Naive thymus-derived CD4-positive, alpha-beta T cell (primary cell): ENCODE measurements at regions of chr3 and their contacts with region 1.

Region 1: GRCh38 chr3:43621656-43622432 is at the start of gene ANO10:
- DNase-seq: peak; percentile 82 to 99 (median 91)
- ATAC-seq: peak; percentile 97
- H3K4me3 ChIP-seq: peak within 1 kb of the TSS; percentile 84
- H3K4me3 Mint-ChIP-seq: peak within 1 kb of the TSS; percentile 82 to 94 (median 91)
- H3K27ac ChIP-seq: peak within 1 kb of the TSS; percentile 60
- H3K27ac Mint-ChIP-seq: peak within 1 kb of the TSS; percentile 68 to 92 (median 86)
- H3K4me1 ChIP-seq: peaks cover 11 to 15% of the 10 kb centered on the region in 2 donors
- H3K4me1 Mint-ChIP-seq: peaks cover 8 to 26% (median 23%) of the 10 kb centered on the region in 7 donors
- H3K27me3 ChIP-seq: no peaks in the 10 kb centered on the region
- H3K27me3 Mint-ChIP-seq: peaks cover 0 to 15% (median 0%) of the 10 kb centered on the region in 5 donors
- total RNA-seq, gene ANO10: 6.1 to 13.6 (median 9.3) TPM

Region 2: GRCh38 chr3:42581709-42582473 is 1040.0 kb before region 1 on chr3 and contains the start of gene SEC22C:
- CTCF ChIA-PET with region 1: no interaction called
- POLR2A ChIA-PET with region 1: no interaction called
- intact Hi-C with region 1: loop called in 1 of 2 experiments (anchors 5 kb)
- DNase-seq: peak; percentile 86 to 95 (median 94)
- ATAC-seq: peak; percentile 94
- H3K4me3 ChIP-seq: peak within 1 kb of the TSS; percentile 86
- H3K4me3 Mint-ChIP-seq: peak within 1 kb of the TSS; percentile 77 to 97 (median 94)
- H3K27ac ChIP-seq: peak within 1 kb of the TSS; percentile 92
- H3K27ac Mint-ChIP-seq: peak within 1 kb of the TSS; percentile 89 to 99 (median 96)
- H3K4me1 ChIP-seq: peaks cover 19 to 25% of the 10 kb centered on the region in 2 donors
- H3K4me1 Mint-ChIP-seq: peaks cover 31 to 60% (median 57%) of the 10 kb centered on the region in 7 donors
- H3K27me3 ChIP-seq: no peaks in the 10 kb centered on the region
- H3K27me3 Mint-ChIP-seq: no peaks in the 10 kb centered on the region
- total RNA-seq, gene SEC22C: 39.7 to 54.8 (median 51.3) TPM

Region 3: GRCh38 chr3:43389388-43390254 is 232.2 kb before region 1 on chr3:
- CTCF ChIA-PET with region 1: no interaction called
- POLR2A ChIA-PET with region 1: no interaction called
- intact Hi-C with region 1: loop called in 1 of 2 experiments (anchors 5 kb)
- DNase-seq: peak in 8 of 9 donors; percentile 58 to 91 (median 85)
- ATAC-seq: peak; percentile 98
- H3K4me3 ChIP-seq: peak overlapping the region; percentile 18
- H3K4me3 Mint-ChIP-seq: peak overlapping the region in 9 of 10 donors; percentile 48 to 81 (median 60)
- H3K27ac ChIP-seq: peak overlapping the region; percentile 50
- H3K27ac Mint-ChIP-seq: peak overlapping the region; percentile 85 to 97 (median 94)
- H3K4me1 ChIP-seq: peaks cover 30 to 39% of the 10 kb centered on the region in 2 donors
- H3K4me1 Mint-ChIP-seq: peaks cover 40 to 83% (median 70%) of the 10 kb centered on the region in 7 donors
- H3K27me3 ChIP-seq: no peaks in the 10 kb centered on the region
- H3K27me3 Mint-ChIP-seq: peaks cover 0 to 12% (median 0%) of the 10 kb centered on the region in 5 donors

Region 4: DNA sequence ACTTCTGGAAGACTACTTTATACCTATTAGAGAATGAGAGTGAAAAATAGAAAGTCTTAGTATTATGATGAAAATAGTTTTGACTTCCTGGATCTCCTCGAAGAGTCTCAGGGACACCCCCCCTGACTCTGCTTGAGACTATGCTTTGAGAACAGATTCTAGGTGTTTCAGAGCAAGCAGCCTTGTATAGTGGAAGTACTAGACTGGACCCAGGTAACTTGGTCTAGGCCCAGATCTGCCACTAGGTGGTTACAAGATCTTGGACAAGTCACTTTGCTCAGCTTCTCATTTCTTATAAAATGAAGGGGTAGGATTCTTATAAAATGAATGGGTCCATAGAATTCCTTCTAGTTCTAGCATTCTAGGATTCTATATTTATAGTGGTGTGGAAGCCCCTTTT is 78.0 kb after region 1 on chr3:
- CTCF ChIA-PET with region 1: no interaction called
- POLR2A ChIA-PET with region 1: no interaction called
- intact Hi-C with region 1: no loop called
- DNase-seq: peak in 2 of 9 donors; percentile 8 to 9
- ATAC-seq: peak; percentile 42
- H3K4me3 ChIP-seq: no peak overlapping the region
- H3K4me3 Mint-ChIP-seq: no peak overlapping the region
- H3K27ac ChIP-seq: no peak overlapping the region
- H3K27ac Mint-ChIP-seq: no peak overlapping the region
- H3K4me1 ChIP-seq: no peaks in the 10 kb centered on the region
- H3K4me1 Mint-ChIP-seq: peaks cover 0 to 25% (median 5%) of the 10 kb centered on the region in 7 donors
- H3K27me3 ChIP-seq: no peaks in the 10 kb centered on the region
- H3K27me3 Mint-ChIP-seq: no peaks in the 10 kb centered on the region

Region 5: DNA sequence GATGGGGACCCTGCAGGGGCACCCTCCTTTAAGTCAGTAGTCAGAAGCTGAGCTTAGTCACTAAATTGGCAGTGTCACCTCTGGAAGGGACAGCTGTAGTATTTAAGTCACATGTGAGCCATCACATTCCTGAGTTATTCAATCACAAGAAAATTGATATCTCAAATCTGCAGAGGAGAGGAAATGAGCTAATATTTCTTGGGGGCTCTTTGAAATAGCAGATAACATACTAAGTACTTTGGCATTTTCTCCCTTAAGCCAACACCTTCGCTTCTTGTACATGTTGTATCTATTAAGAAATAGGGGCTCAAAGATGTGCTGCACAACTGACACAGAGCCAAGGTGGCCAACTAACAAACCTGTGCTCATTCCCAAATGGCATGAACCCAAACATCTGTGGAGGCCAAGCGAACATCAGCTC is 131.9 kb after region 1 on chr3:
- CTCF ChIA-PET with region 1: no interaction called
- POLR2A ChIA-PET with region 1: interaction called, 6 read pairs
- intact Hi-C with region 1: loop called (anchors 1 to 5 kb)
- DNase-seq: no peak
- ATAC-seq: no peak
- H3K4me3 ChIP-seq: no peak overlapping the region
- H3K4me3 Mint-ChIP-seq: no peak overlapping the region
- H3K27ac ChIP-seq: no peak overlapping the region
- H3K27ac Mint-ChIP-seq: peak overlapping the region in 3 of 9 donors; percentile 30 to 97 (median 71)
- H3K4me1 ChIP-seq: peaks cover 8 to 41% of the 10 kb centered on the region in 2 donors
- H3K4me1 Mint-ChIP-seq: peaks cover 18 to 55% (median 46%) of the 10 kb centered on the region in 7 donors
- H3K27me3 ChIP-seq: no peaks in the 10 kb centered on the region
- H3K27me3 Mint-ChIP-seq: peaks cover 0 to 10% (median 0%) of the 10 kb centered on the region in 5 donors

Region 6: DNA sequence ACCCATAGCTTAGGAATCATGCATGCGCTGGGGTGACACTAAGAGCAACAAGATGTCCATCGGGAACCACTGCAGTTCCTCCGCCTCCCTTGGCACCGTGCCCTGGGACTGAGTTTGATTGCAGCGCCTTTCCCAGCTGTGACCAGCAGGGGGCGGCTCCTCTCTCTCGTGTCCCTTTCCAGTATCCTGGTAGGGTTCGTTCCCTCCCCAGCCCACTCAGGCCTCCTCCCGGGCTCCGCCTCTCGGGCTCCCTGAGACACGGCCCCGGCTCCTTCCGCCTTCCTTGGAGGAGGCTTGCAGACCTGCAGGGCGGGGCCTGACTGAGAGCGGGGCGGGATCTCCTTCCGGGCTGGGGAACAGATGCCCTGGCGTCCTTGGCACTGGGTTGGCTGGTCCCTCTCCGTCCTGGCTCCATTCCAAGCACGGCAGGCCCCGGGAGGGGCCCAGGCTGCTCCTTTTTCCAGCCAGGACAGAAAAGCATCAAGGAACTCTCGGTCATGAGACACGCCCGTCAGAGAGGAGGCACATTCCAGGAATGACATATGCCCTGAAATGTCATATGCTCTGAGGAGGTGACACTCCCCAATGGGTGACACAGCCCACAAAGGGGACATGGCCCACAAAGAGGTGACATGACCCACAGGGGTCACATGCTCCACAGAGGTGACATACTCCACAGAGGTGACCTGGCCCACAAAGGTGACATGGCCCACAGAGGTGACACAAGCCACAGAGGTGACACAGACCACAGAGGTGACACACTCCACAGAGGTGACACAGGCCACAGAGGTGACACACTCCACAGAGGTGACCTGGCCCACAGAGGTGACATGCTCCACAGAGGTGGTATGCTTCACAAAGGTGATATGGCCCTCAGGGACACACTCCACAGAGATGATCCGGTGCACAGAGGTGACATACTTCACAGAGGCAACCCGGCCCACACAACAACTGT is 147.9 kb after region 1 on chr3:
- CTCF ChIA-PET with region 1: no interaction called
- POLR2A ChIA-PET with region 1: no interaction called
- intact Hi-C with region 1: loop called in 1 of 2 experiments (anchors 5 kb)
- DNase-seq: peak; percentile 48 to 76 (median 68)
- ATAC-seq: peak; percentile 75
- H3K4me3 ChIP-seq: no peak overlapping the region
- H3K4me3 Mint-ChIP-seq: peak overlapping the region in 9 of 10 donors; percentile 0 to 66 (median 35)
- H3K27ac ChIP-seq: no peak overlapping the region
- H3K27ac Mint-ChIP-seq: peak overlapping the region in 2 of 9 donors; percentile 15 to 17
- H3K4me1 ChIP-seq: peaks cover 14 to 20% of the 10 kb centered on the region in 2 donors
- H3K4me1 Mint-ChIP-seq: peaks cover 5 to 20% (median 10%) of the 10 kb centered on the region in 7 donors
- H3K27me3 ChIP-seq: no peaks in the 10 kb centered on the region
- H3K27me3 Mint-ChIP-seq: peaks cover 0 to 21% (median 0%) of the 10 kb centered on the region in 5 donors

Region 7: DNA sequence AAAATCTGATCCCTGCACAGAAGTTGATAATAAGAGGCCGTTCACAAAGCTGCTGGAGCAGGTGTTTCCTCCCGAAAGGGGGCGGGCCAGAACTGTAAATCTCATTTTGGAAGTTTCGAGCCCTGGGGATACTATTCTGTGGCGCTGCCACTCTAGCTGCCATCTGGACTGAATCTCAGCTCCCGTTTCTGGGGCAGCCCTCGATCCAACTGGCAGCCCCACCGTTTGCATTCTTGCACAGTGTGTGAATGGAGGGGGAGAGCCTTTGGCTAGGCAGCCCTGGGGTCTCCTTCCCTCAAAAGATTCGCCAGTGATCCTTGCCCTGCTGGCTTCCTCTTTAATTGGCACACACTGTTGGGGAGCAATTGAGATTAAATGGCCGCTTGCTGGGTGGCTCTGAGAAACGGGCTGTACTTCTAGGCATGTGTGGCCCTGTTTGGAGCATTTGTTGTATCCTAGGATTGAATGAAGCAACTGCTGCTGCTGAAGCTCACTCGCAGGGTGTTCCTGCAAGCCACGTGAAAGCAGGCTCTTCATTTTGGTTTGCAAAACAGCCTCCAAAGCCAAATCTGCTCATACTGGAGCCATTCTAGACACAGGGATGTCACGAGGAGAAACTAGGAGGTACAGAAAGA is 562.6 kb after region 1 on chr3:
- CTCF ChIA-PET with region 1: no interaction called
- POLR2A ChIA-PET with region 1: no interaction called
- intact Hi-C with region 1: no loop called
- DNase-seq: no peak
- ATAC-seq: no peak
- H3K4me3 ChIP-seq: no peak overlapping the region
- H3K4me3 Mint-ChIP-seq: no peak overlapping the region
- H3K27ac ChIP-seq: no peak overlapping the region
- H3K27ac Mint-ChIP-seq: no peak overlapping the region
- H3K4me1 ChIP-seq: no peaks in the 10 kb centered on the region
- H3K4me1 Mint-ChIP-seq: peaks cover 0 to 6% (median 0%) of the 10 kb centered on the region in 7 donors
- H3K27me3 ChIP-seq: no peaks in the 10 kb centered on the region
- H3K27me3 Mint-ChIP-seq: peaks cover 9 to 46% (median 14%) of the 10 kb centered on the region in 5 donors

Region 8: GRCh38 chr3:44976002-44976815 is 1354.4 kb after region 1 on chr3 and contains the starts of genes EXOSC7 and ZDHHC3:
- CTCF ChIA-PET with region 1: no interaction called
- POLR2A ChIA-PET with region 1: no interaction called
- intact Hi-C with region 1: loop called in 1 of 2 experiments (anchors 5 kb)
- DNase-seq: peak; percentile 73 to 89 (median 85)
- ATAC-seq: peak; percentile 98
- H3K4me3 ChIP-seq: peak within 1 kb of the TSS; percentile 94
- H3K4me3 Mint-ChIP-seq: peak within 1 kb of the TSS; percentile 90 to 97 (median 94)
- H3K27ac ChIP-seq: peak within 1 kb of the TSS; percentile 98
- H3K27ac Mint-ChIP-seq: peak within 1 kb of the TSS; percentile 85 to 97 (median 94)
- H3K4me1 ChIP-seq: peaks cover 21 to 37% of the 10 kb centered on the region in 2 donors
- H3K4me1 Mint-ChIP-seq: peaks cover 50 to 87% (median 79%) of the 10 kb centered on the region in 7 donors
- H3K27me3 ChIP-seq: no peaks in the 10 kb centered on the region
- H3K27me3 Mint-ChIP-seq: no peaks in the 10 kb centered on the region
- total RNA-seq, gene EXOSC7: 30.7 to 57.9 (median 44.3) TPM
- total RNA-seq, gene ZDHHC3: 38.5 to 54.0 (median 48.8) TPM